ENCODE measurements at regions of chr5 and their contacts with region 1.

Region 1: DNA sequence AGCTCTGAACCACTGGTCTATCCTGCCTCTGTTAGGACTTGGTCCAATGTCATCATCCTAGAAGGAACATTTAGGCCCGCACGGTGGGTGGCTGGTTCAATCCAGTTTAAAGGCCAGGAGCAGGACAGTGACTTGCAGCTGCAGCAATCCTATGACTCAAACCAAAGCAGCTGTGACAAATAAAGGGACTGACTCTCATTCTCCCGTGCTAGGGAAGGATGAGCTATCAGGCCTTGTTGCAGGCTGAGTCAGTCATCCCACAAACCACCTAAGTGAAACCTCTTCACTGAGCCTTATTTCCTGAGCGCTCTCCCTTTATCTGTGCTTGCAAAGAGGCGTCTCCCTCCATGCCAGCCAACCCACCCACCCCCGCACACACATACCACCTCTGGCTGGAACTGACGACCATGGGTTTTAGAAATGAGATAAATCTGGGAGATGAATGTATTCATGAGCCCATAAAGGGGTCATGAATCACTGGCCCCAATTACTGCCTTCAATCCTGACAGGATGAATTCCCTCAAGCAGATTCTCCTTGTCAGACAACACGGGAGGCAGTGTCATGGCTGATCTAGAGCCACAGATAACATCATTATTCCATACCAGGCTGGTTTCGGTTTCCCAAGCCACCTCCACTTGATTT is 93.4 kb downstream of the KCNIP1 start:
- DNase-seq: peak in 1 of 2 experiments; percentile 15
- ATAC-seq: peak; percentile 32 to 40; a peak in 2 of 6 replicates
- H3K4me3 ChIP-seq: no peak overlapping the region
- H3K27ac ChIP-seq: no peak overlapping the region
- H3K4me1 ChIP-seq: no peaks in the 10 kb centered on the region
- CTCF ChIP-seq: no peak
- EP300 ChIP-seq: no peak
- POLR2A ChIP-seq: no peak
- RAD21 ChIP-seq: no peak

Region 2: DNA sequence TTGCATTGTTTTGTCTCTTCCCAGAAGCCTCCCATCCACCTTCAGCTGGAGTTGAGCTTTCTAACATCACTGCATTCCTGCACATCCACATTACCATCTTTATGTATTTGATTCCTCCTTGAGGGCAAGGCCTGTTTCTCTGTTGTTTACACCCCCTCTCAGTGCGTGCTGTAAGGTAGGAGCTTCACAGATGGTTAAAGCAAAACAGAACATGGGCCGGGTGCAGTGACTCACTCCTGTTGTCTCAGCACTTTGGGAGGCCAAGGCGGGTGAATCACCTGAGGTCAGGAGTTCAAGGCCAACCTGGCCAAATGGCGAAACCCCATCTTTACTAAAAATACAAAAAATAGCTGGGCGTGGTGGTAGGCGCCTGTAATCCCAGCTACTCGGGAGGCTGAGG is 17.5 kb after region 1 on chr5:
- CTCF ChIA-PET with region 1: interaction called, 15 read pairs
- POLR2A ChIA-PET with region 1: no interaction called
- DNase-seq: peak in 1 of 2 experiments; percentile 59
- ATAC-seq: peak; percentile 31 to 79; a peak in 4 of 6 replicates
- H3K4me3 ChIP-seq: no peak overlapping the region
- H3K27ac ChIP-seq: peak overlapping the region in 1 of 2 experiments; percentile 30; a peak in 1 of 6 replicates
- H3K4me1 ChIP-seq: peaks cover 14% of the 10 kb centered on the region
- CTCF ChIP-seq: no peak
- EP300 ChIP-seq: no peak
- POLR2A ChIP-seq: no peak
- RAD21 ChIP-seq: no peak

Measured in A549 (cell line).